ENCODE measurements at regions of chr7 and their contacts with region 1.

Region 1: GRCh38 chr7:93799750-93800357 is 90.7 kb downstream of the TFPI2 start:
- DNase-seq: peak; percentile 23
- ATAC-seq: no peak
- H3K4me3 ChIP-seq: no peak overlapping the region
- H3K27ac ChIP-seq: no peak overlapping the region
- H3K4me1 ChIP-seq: no peaks in the 10 kb centered on the region
- H3K27me3 ChIP-seq: no peaks in the 10 kb centered on the region
- CTCF ChIP-seq: peak; percentile 67
- POLR2A ChIP-seq: no peak
- RAD21 ChIP-seq: peak; percentile 63

Region 2: GRCh38 chr7:92720604-92721350 is 1079.1 kb before region 1 on chr7:
- CTCF ChIA-PET with region 1: no interaction called
- POLR2A ChIA-PET with region 1: no interaction called
- dilution Hi-C with region 1: no loop called
- in situ Hi-C with region 1: no loop called
- intact Hi-C with region 1: no loop called
- DNase-seq: no peak
- ATAC-seq: no peak
- H3K4me3 ChIP-seq: no peak overlapping the region
- H3K27ac ChIP-seq: no peak overlapping the region
- H3K4me1 ChIP-seq: peaks cover 9% of the 10 kb centered on the region
- H3K27me3 ChIP-seq: no peaks in the 10 kb centered on the region
- CTCF ChIP-seq: no peak
- POLR2A ChIP-seq: no peak
- RAD21 ChIP-seq: no peak

Region 3: GRCh38 chr7:93980744-93981479 is 181.1 kb after region 1 on chr7:
- CTCF ChIA-PET with region 1: no interaction called
- POLR2A ChIA-PET with region 1: no interaction called
- dilution Hi-C with region 1: no loop called
- in situ Hi-C with region 1: no loop called
- intact Hi-C with region 1: loop called (anchors 10 kb)
- DNase-seq: peak; percentile 40
- ATAC-seq: peak; percentile 51
- H3K4me3 ChIP-seq: no peak overlapping the region
- H3K27ac ChIP-seq: no peak overlapping the region
- H3K4me1 ChIP-seq: peaks cover 4% of the 10 kb centered on the region; the same call in 1 of the 2 replicates
- H3K27me3 ChIP-seq: no peaks in the 10 kb centered on the region
- CTCF ChIP-seq: no peak
- POLR2A ChIP-seq: no peak
- RAD21 ChIP-seq: no peak

Region 4: DNA sequence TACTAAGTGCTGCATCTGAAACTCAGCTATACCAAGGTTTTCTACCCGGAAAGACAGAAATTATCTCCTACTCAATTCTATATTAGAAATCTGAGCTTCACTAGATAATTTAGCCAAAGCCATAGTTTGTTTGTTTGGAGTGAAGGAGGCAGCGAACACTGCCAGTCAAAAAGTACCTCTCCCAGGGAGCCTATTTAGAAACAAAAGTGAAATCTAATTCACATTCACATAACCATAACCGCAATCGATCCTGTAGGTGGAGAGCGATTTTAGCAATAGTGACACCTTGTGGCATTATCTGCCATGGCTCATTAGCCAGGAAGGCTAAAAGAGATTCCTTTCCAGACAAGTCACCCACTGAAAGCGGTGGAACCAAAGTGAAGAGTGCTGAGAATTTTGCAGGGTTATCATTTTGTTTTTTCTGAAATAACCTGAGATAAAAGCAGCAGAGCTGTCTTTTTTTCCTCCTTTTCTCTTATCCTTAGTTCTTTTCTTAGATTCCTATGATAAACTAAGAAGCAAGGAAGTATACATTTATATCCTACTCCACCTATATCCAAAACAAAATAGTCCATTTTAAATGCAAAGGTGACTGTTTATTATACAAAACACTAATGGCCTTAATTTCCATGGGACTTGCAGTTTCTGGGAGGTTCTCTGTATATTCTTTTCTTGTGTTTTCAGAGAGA is 288.0 kb after region 1 on chr7:
- CTCF ChIA-PET with region 1: interaction called, 4 read pairs
- POLR2A ChIA-PET with region 1: no interaction called
- dilution Hi-C with region 1: no loop called
- in situ Hi-C with region 1: no loop called
- intact Hi-C with region 1: loop called (anchors 1 kb)
- DNase-seq: peak; percentile 85
- ATAC-seq: peak; percentile 87
- H3K4me3 ChIP-seq: peak overlapping the region; percentile 15; the same call in 1 of the 2 replicates
- H3K27ac ChIP-seq: no peak overlapping the region
- H3K4me1 ChIP-seq: peaks cover 9% of the 10 kb centered on the region
- H3K27me3 ChIP-seq: no peaks in the 10 kb centered on the region
- CTCF ChIP-seq: peak; percentile 78
- POLR2A ChIP-seq: no peak
- RAD21 ChIP-seq: peak; percentile 84

Region 5: GRCh38 chr7:94228678-94229077 is 428.8 kb after region 1 on chr7:
- CTCF ChIA-PET with region 1: no interaction called
- POLR2A ChIA-PET with region 1: no interaction called
- dilution Hi-C with region 1: no loop called
- in situ Hi-C with region 1: loop called (anchors 5 kb)
- intact Hi-C with region 1: loop called (anchors 1 kb)
- DNase-seq: peak; percentile 33
- ATAC-seq: no peak
- H3K4me3 ChIP-seq: no peak overlapping the region
- H3K27ac ChIP-seq: no peak overlapping the region
- H3K4me1 ChIP-seq: peaks cover 3% of the 10 kb centered on the region
- H3K27me3 ChIP-seq: no peaks in the 10 kb centered on the region
- CTCF ChIP-seq: no peak
- POLR2A ChIP-seq: no peak
- RAD21 ChIP-seq: no peak

Measured in IMR-90 (cell line).